ENCODE measurements at regions of chr6 and their contacts with region 1.

Region 1: DNA sequence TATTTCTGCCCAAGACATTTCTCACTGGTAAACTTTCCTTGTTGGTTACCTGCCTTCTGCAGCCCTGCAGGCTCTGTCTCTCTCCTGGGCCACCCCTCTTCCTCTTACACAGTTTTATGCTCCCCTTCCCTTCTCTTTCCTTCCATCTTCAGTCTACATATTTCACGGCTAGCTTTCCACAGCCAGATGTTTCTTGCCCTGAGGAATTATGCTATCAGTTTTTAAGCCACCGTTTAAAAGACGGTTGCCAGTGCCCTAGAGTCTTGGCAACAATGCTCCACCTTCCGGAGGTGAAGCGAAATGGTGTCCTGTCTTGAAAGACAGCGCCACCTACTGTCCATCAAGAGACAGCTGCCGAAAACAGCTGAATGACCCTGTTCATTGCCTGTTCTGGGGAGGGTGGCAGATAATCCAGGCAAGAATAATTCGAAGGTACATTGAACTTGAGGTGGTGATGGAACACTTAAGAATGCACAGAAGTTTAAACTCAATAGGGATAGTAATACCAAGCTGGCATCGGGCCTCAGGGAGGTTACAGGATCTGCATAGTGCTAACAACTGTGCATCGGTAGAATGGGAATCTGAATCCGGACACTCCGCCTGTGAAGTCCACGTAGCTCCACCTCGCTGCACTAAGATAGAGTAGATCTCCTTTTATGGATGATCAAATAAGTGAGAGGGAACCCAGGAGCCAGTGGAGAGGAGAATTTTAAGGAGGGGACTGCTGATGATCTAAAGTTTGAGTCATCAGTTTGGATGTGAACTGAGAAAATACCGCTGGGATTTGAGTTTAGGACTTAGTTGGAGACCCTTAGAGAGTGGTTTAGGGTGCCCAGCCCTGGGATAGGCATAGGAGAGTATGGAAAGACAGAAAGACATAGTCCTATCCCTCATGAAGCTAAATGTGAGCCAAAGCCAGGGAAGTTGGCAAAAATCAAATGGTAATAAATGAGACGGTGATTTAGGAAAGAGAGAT is 4.8 kb upstream of the TRIM40 start:
- DNase-seq: peak; percentile 82 to 84
- ATAC-seq: peak; percentile 86 to 97
- H3K4me3 ChIP-seq: no peak overlapping the region
- H3K27ac ChIP-seq: peak overlapping the region; percentile 44 to 70; a peak in 4 of 6 replicates
- H3K4me1 ChIP-seq: peaks cover 26% of the 10 kb centered on the region
- CTCF ChIP-seq: peak; percentile 95
- EP300 ChIP-seq: no peak
- POLR2A ChIP-seq: no peak
- RAD21 ChIP-seq: peak; percentile 81 to 86

Region 2: DNA sequence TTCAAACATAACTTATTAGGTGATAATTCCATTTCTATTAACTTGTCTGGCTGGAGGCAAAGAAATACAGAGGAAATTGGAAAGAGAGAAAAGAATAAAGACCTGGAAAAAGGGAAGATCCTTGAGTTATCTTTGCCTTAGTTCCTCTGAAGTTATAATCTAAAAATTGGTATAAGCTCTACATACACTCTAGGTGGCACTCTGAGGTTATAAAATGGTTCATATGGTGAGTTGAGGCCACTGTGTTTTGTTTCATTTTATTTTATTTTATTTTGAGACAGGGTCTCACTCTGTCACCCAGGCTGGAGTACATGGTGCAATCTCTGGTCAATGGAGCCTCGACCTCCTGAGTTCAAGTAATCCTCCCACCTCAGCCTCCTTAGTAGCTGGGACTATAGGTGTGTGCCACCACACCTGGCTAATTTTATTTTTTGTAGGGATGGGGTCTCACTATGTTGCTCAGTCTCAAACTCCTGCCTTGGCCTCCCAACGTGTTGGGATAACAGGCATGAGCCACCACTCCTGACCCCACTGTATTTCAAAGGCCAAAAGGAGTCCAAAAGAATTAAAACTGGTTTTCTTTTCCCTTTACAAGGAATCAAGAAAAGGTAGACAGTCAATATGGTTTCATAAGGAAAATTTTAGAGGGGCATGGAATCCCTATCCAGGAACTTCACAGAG is 1634.9 kb before region 1 on chr6:
- CTCF ChIA-PET with region 1: no interaction called
- POLR2A ChIA-PET with region 1: no interaction called
- DNase-seq: no peak
- ATAC-seq: 0 out of 6 replicates have a peak, but pooled peaks of 1 of the 2 experiments have one; percentile 36
- H3K4me3 ChIP-seq: no peak overlapping the region
- H3K27ac ChIP-seq: no peak overlapping the region
- H3K4me1 ChIP-seq: no peaks in the 10 kb centered on the region
- CTCF ChIP-seq: peak; percentile 43
- EP300 ChIP-seq: no peak
- POLR2A ChIP-seq: no peak
- RAD21 ChIP-seq: peak; percentile 59 to 61

Region 3: GRCh38 chr6:30053682-30054081 is 77.5 kb before region 1 on chr6:
- CTCF ChIA-PET with region 1: no interaction called
- POLR2A ChIA-PET with region 1: no interaction called
- DNase-seq: no peak
- ATAC-seq: no peak
- H3K4me3 ChIP-seq: no peak overlapping the region
- H3K27ac ChIP-seq: no peak overlapping the region
- H3K4me1 ChIP-seq: no peaks in the 10 kb centered on the region
- CTCF ChIP-seq: no peak
- EP300 ChIP-seq: no peak
- POLR2A ChIP-seq: no peak
- RAD21 ChIP-seq: no peak

Region 4: GRCh38 chr6:30091577-30092381 is 39.4 kb before region 1 on chr6:
- CTCF ChIA-PET with region 1: interaction called, 10 read pairs
- POLR2A ChIA-PET with region 1: no interaction called
- DNase-seq: peak in 1 of 2 experiments; percentile 48
- ATAC-seq: peak; percentile 53 to 74; a peak in 4 of 6 replicates
- H3K4me3 ChIP-seq: no peak overlapping the region
- H3K27ac ChIP-seq: peak overlapping the region; percentile 13 to 68; a peak in 3 of 6 replicates
- H3K4me1 ChIP-seq: peaks cover 27% of the 10 kb centered on the region
- CTCF ChIP-seq: no peak
- EP300 ChIP-seq: no peak
- POLR2A ChIP-seq: no peak
- RAD21 ChIP-seq: no peak

Region 5: DNA sequence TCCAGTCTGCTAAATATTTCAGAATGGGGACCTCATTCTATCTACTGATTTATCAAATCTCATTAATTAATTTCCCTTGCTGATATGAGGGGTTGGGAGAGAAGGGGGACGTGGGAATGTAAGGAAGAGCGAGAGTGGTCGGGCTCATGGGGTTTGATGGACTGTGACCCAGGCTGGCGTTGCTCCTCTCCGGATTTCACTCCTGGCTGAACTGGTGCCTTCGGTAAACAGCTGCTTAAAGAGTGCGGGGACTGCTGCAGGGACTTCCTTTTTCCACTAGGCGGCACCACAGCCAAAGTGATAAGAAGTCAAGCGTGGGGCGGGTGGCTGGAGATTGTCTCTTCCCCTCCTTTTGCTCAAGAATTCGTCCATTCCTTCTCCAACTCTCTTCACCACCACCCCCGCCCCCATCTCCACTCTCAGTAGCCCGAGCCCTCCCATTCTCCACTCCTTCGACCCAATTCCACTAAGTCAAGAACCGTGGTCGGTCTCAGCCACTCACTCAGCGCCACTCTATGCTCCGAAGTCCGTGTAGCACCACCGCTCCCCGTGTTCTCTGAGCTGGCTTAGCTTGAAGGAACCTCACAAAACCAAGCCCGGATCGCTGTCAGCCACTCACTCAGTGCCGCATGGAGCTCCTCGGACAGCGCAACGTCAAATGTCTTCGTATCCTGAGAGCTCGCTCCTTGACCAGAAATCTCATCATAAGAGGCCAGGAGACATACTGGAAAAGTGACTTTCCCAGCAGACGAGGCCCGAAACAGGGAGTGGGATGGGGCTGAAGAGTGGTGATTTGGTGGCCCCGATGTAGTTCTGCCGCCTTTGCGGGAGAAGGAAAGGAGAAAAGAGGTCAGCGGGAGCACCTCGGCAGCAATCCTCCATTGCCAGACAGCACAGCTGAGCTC is 28.0 kb before region 1 on chr6:
- CTCF ChIA-PET with region 1: interaction called, 353 read pairs
- POLR2A ChIA-PET with region 1: interaction called, 5 read pairs
- DNase-seq: peak; percentile 83 to 85
- ATAC-seq: peak; percentile 75 to 85
- H3K4me3 ChIP-seq: peak overlapping the region; percentile 38
- H3K27ac ChIP-seq: peak overlapping the region; percentile 66 to 77
- H3K4me1 ChIP-seq: peaks cover 21% of the 10 kb centered on the region
- CTCF ChIP-seq: peak; percentile 79
- EP300 ChIP-seq: no peak
- POLR2A ChIP-seq: no peak
- RAD21 ChIP-seq: peak; percentile 87 to 91

Region 6: GRCh38 chr6:30149231-30149630 is 18.1 kb after region 1 on chr6:
- CTCF ChIA-PET with region 1: interaction called, 56 read pairs
- POLR2A ChIA-PET with region 1: no interaction called
- DNase-seq: no peak
- ATAC-seq: no peak
- H3K4me3 ChIP-seq: no peak overlapping the region
- H3K27ac ChIP-seq: no peak overlapping the region
- H3K4me1 ChIP-seq: peaks cover 6% of the 10 kb centered on the region
- CTCF ChIP-seq: no peak
- EP300 ChIP-seq: no peak
- POLR2A ChIP-seq: no peak
- RAD21 ChIP-seq: no peak